Activated CD8-positive, alpha-beta T cell treated with anti-CD3 and anti-CD28 coated beads for 36 hours (primary cell): ENCODE measurements at regions of chr13 and their contacts with region 1.

Region 1: GRCh38 chr13:99895995-99896786 is 75.4 kb downstream of the ZIC5 start:
- DNase-seq: no peak
- ATAC-seq: no peak
- H3K4me3 Mint-ChIP-seq: peak overlapping the region; percentile 61
- H3K27ac Mint-ChIP-seq: no peak overlapping the region
- H3K4me1 Mint-ChIP-seq: peaks cover 8% of the 10 kb centered on the region
- H3K27me3 Mint-ChIP-seq: peaks cover 55% of the 10 kb centered on the region
- CTCF ChIP-seq: no peak

Region 2: GRCh38 chr13:99782669-99783068 is 113.5 kb before region 1 on chr13:
- CTCF ChIA-PET with region 1: no interaction called
- POLR2A ChIA-PET with region 1: no interaction called
- intact Hi-C with region 1: no loop called
- DNase-seq: no peak
- ATAC-seq: no peak
- H3K4me3 Mint-ChIP-seq: no peak overlapping the region
- H3K27ac Mint-ChIP-seq: no peak overlapping the region
- H3K4me1 Mint-ChIP-seq: no peaks in the 10 kb centered on the region
- H3K27me3 Mint-ChIP-seq: no peaks in the 10 kb centered on the region
- CTCF ChIP-seq: no peak

Region 3: GRCh38 chr13:99830931-99831330 is 65.3 kb before region 1 on chr13:
- CTCF ChIA-PET with region 1: no interaction called
- POLR2A ChIA-PET with region 1: no interaction called
- intact Hi-C with region 1: no loop called
- DNase-seq: no peak
- ATAC-seq: no peak
- H3K4me3 Mint-ChIP-seq: no peak overlapping the region
- H3K27ac Mint-ChIP-seq: no peak overlapping the region
- H3K4me1 Mint-ChIP-seq: no peaks in the 10 kb centered on the region
- H3K27me3 Mint-ChIP-seq: no peaks in the 10 kb centered on the region
- CTCF ChIP-seq: no peak

Region 4: DNA sequence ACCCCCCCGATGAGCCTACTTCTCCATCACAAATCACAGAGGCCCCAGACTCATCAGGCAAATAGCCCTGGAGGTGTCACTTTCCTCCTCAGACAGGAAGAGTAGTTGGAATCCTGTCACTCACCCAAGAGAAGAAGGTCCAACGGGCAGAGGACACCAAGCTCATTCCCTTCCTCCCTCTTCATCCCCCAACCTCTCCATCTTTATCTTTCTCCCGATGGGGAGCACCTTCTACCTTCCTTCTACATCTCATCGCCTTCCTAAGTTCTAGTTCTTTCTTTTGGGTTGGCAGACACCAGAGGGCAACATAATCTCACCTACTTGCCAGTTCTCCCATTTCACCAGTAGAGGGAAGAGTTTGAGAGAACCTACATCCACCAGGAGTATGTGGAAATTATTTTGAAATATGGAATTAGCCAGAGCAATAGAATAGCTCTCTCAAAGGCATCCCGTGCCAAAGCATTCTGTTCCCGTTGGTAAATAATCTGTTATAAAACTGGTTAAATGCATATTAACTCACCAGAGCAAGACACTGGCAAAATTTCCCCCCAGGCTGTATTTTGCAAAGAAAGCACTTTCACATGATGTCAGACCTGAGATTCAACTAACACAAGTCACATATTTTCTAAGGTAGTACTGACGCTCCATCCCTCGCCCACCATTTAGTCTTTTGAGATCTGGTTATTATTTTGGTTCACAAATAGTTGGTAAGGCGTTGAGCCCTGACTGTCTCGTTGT is 20.3 kb after region 1 on chr13:
- CTCF ChIA-PET with region 1: interaction called, 59 read pairs
- POLR2A ChIA-PET with region 1: interaction called, 3 read pairs
- intact Hi-C with region 1: no loop called
- DNase-seq: peak; percentile 16
- ATAC-seq: peak; percentile 78
- H3K4me3 Mint-ChIP-seq: no peak overlapping the region
- H3K27ac Mint-ChIP-seq: no peak overlapping the region
- H3K4me1 Mint-ChIP-seq: peaks cover 12% of the 10 kb centered on the region
- H3K27me3 Mint-ChIP-seq: peaks cover 18% of the 10 kb centered on the region
- CTCF ChIP-seq: peak; percentile 94

Region 5: GRCh38 chr13:99935777-99936176 is 39.6 kb after region 1 on chr13:
- CTCF ChIA-PET with region 1: no interaction called
- POLR2A ChIA-PET with region 1: no interaction called
- intact Hi-C with region 1: no loop called
- DNase-seq: peak; percentile 7
- ATAC-seq: no peak
- H3K4me3 Mint-ChIP-seq: no peak overlapping the region
- H3K27ac Mint-ChIP-seq: no peak overlapping the region
- H3K4me1 Mint-ChIP-seq: no peaks in the 10 kb centered on the region
- H3K27me3 Mint-ChIP-seq: peaks cover 22% of the 10 kb centered on the region
- CTCF ChIP-seq: no peak

Region 6: GRCh38 chr13:100428986-100429385 is 532.8 kb after region 1 on chr13:
- CTCF ChIA-PET with region 1: no interaction called
- POLR2A ChIA-PET with region 1: no interaction called
- intact Hi-C with region 1: no loop called
- DNase-seq: no peak
- ATAC-seq: no peak
- H3K4me3 Mint-ChIP-seq: no peak overlapping the region
- H3K27ac Mint-ChIP-seq: no peak overlapping the region
- H3K4me1 Mint-ChIP-seq: peaks cover 17% of the 10 kb centered on the region
- H3K27me3 Mint-ChIP-seq: no peaks in the 10 kb centered on the region
- CTCF ChIP-seq: no peak